Activated CD4-positive, alpha-beta T cell treated with anti-CD3 and anti-CD28 coated beads, Interleukin-2, amount 10 ng/mL, durations not matched to agents 24 days and 14 days (primary cell): ENCODE measurements at regions of chr14 and their contacts with region 1.

Region 1: GRCh38 chr14:21103710-21104447 is 3.0 kb downstream of the TMEM253 start:
- DNase-seq: peak; percentile 98
- H3K4me3 Mint-ChIP-seq: peak overlapping the region; percentile 93
- H3K27ac Mint-ChIP-seq: peak overlapping the region; percentile 94
- H3K4me1 Mint-ChIP-seq: peaks cover 35% of the 10 kb centered on the region
- H3K27me3 Mint-ChIP-seq: peaks cover 9% of the 10 kb centered on the region

Region 2: GRCh38 chr14:20989572-20990551 is 114.0 kb before region 1 on chr14 and contains the start of gene METTL17:
- intact Hi-C with region 1: loop called (anchors 1 kb)
- DNase-seq: peak; percentile 96
- H3K4me3 Mint-ChIP-seq: peak within 1 kb of the TSS; percentile 96
- H3K27ac Mint-ChIP-seq: peak within 1 kb of the TSS; percentile 87
- H3K4me1 Mint-ChIP-seq: peaks cover 23% of the 10 kb centered on the region
- H3K27me3 Mint-ChIP-seq: no peaks in the 10 kb centered on the region
- total RNA-seq, gene METTL17: 94.6 and 99.1 TPM in 2 replicates

Region 3: DNA sequence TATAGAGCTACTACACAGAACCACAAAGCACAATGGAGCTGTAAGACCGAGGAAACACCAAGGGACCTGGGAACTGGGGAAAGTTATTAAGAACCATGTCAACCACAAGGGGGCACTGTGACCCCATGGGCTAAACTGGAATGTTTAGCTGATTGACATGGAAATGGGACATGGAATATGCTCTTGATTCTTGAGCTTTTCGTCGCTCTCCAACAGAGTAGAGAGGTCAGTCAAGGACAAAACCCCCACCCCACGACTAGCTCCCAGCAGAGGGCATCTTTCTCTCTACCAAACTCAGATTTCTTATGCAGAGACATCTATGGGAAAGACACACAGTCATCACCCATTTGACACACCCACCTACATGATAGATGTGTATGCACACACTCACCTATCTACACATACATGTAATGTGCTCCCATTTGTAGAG is 89.1 kb before region 1 on chr14:
- intact Hi-C with region 1: loop called (anchors 1 kb)
- DNase-seq: peak; percentile 94
- H3K4me3 Mint-ChIP-seq: no peak overlapping the region
- H3K27ac Mint-ChIP-seq: no peak overlapping the region
- H3K4me1 Mint-ChIP-seq: peaks cover 2% of the 10 kb centered on the region
- H3K27me3 Mint-ChIP-seq: peaks cover 30% of the 10 kb centered on the region

Region 4: GRCh38 chr14:21071225-21072030 is 32.5 kb before region 1 on chr14:
- intact Hi-C with region 1: loop called (anchors 1 kb)
- DNase-seq: peak; percentile 80
- H3K4me3 Mint-ChIP-seq: peak overlapping the region; percentile 77
- H3K27ac Mint-ChIP-seq: no peak overlapping the region
- H3K4me1 Mint-ChIP-seq: peaks cover 33% of the 10 kb centered on the region
- H3K27me3 Mint-ChIP-seq: peaks cover 73% of the 10 kb centered on the region

Region 5: DNA sequence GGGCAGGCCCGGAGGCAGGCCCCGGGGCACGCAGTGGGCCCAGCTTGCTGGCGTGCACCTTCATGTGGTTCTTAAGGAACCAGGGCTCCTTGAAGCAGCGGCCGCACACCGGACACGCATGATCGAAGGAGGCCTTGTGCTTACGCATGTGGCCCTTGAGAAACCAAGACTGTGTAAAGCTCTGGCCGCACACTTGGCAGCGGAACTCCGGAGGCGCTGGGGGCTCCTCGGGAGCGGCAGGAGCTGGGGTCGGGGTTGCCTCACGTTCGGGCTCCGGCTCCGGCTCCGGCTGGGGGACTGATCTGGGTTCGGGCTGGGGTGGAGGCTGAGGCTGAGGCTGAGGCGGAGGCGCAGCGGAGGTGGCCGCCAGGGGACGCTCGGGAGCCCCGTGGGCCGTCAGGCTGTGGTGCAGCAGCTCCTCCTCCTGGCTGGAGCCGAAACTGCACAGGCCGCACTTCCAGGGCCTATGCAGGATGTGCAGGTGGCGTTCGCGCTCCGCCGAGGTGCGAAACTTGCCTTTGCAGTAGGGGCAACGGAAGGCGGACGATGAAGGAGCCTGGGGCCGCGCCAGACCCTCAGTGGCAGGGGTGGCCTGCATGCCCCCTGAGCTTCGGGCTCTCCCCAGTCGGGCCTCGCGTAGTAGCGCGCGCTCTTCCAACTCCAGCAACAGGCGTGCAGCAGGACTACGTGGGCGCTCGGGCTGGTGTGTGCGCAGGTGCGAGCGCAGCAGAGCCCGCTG is 11.4 kb before region 1 on chr14:
- intact Hi-C with region 1: loop called (anchors 1 kb)
- DNase-seq: peak; percentile 98
- H3K4me3 Mint-ChIP-seq: no peak overlapping the region
- H3K27ac Mint-ChIP-seq: no peak overlapping the region
- H3K4me1 Mint-ChIP-seq: peaks cover 19% of the 10 kb centered on the region
- H3K27me3 Mint-ChIP-seq: peaks cover 10% of the 10 kb centered on the region

Region 6: GRCh38 chr14:21269252-21270046 is 165.6 kb after region 1 on chr14 and contains the start of gene HNRNPC:
- intact Hi-C with region 1: loop called (anchors 2 kb)
- DNase-seq: peak; percentile 100
- H3K4me3 Mint-ChIP-seq: peak within 1 kb of the TSS; percentile 92
- H3K27ac Mint-ChIP-seq: peak within 1 kb of the TSS; percentile 100
- H3K4me1 Mint-ChIP-seq: peaks cover 30% of the 10 kb centered on the region
- H3K27me3 Mint-ChIP-seq: no peaks in the 10 kb centered on the region
- total RNA-seq, gene HNRNPC: 1,009 and 1,054 TPM in 2 replicates

Region 7: GRCh38 chr14:21300892-21301291 is 197.0 kb after region 1 on chr14:
- intact Hi-C with region 1: no loop called
- DNase-seq: peak; percentile 62
- H3K4me3 Mint-ChIP-seq: no peak overlapping the region
- H3K27ac Mint-ChIP-seq: no peak overlapping the region
- H3K4me1 Mint-ChIP-seq: peaks cover 4% of the 10 kb centered on the region
- H3K27me3 Mint-ChIP-seq: peaks cover 31% of the 10 kb centered on the region

Region 8: GRCh38 chr14:21557084-21557901 is 453.4 kb after region 1 on chr14:
- intact Hi-C with region 1: loop called (anchors 10 kb)
- DNase-seq: peak; percentile 93
- H3K4me3 Mint-ChIP-seq: peak overlapping the region; percentile 41
- H3K27ac Mint-ChIP-seq: no peak overlapping the region
- H3K4me1 Mint-ChIP-seq: peaks cover 5% of the 10 kb centered on the region
- H3K27me3 Mint-ChIP-seq: no peaks in the 10 kb centered on the region